Mammary epithelial cell (primary cell): ENCODE measurements at regions of chr4 and their contacts with region 1.

Region 1: DNA sequence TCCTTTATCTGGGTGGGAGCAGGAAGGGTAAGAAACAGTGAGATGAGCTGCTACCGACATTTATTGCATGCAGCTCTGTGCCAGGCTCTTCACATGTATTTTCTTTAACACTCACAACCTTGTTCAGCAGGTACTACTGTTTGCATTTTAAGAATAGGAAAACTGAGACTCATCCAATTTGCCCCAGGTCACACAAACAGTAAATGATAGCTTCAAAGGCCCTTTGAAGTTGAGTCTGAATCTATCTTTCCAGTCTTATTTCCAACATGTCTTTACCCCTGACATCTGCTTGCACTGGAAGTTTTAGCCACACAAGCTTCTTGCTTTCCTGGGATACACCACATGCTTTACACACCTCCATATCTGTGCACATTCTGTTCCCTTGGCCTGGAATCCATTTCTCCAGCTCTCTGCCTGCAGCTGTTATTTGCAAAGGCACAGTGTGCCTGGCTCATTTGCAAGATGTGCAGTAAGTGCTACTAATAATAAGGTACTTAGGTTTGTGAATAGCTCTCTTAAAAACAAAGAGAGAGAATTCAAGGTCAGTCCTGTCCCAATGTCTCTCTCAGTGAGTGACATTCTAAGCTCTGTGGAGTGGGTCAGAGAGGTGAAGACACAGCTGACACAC is 61.2 kb downstream of the METTL14 start:
- DNase-seq: no peak
- H3K4me3 ChIP-seq: no peak overlapping the region
- H3K27ac ChIP-seq: no peak overlapping the region
- H3K4me1 ChIP-seq: no peaks in the 10 kb centered on the region
- H3K27me3 ChIP-seq: no peaks in the 10 kb centered on the region
- CTCF ChIP-seq: no peak

Region 2: GRCh38 chr4:118712872-118713271 is 33.5 kb before region 1 on chr4:
- CTCF ChIA-PET with region 1: interaction called, 11 read pairs
- dilution Hi-C with region 1: no loop called
- in situ Hi-C with region 1: no loop called
- intact Hi-C with region 1: no loop called
- DNase-seq: peak; percentile 63
- H3K4me3 ChIP-seq: no peak overlapping the region
- H3K27ac ChIP-seq: no peak overlapping the region
- H3K4me1 ChIP-seq: no peaks in the 10 kb centered on the region
- H3K27me3 ChIP-seq: no peaks in the 10 kb centered on the region
- CTCF ChIP-seq: no peak

Region 3: GRCh38 chr4:118772081-118772766 is 25.8 kb after region 1 on chr4:
- CTCF ChIA-PET with region 1: no interaction called
- dilution Hi-C with region 1: no loop called
- in situ Hi-C with region 1: no loop called
- intact Hi-C with region 1: no loop called
- DNase-seq: peak; percentile 30
- H3K4me3 ChIP-seq: no peak overlapping the region
- H3K27ac ChIP-seq: no peak overlapping the region
- H3K4me1 ChIP-seq: peaks cover 39% of the 10 kb centered on the region
- H3K27me3 ChIP-seq: no peaks in the 10 kb centered on the region
- CTCF ChIP-seq: peak; percentile 50 to 54

Region 4: DNA sequence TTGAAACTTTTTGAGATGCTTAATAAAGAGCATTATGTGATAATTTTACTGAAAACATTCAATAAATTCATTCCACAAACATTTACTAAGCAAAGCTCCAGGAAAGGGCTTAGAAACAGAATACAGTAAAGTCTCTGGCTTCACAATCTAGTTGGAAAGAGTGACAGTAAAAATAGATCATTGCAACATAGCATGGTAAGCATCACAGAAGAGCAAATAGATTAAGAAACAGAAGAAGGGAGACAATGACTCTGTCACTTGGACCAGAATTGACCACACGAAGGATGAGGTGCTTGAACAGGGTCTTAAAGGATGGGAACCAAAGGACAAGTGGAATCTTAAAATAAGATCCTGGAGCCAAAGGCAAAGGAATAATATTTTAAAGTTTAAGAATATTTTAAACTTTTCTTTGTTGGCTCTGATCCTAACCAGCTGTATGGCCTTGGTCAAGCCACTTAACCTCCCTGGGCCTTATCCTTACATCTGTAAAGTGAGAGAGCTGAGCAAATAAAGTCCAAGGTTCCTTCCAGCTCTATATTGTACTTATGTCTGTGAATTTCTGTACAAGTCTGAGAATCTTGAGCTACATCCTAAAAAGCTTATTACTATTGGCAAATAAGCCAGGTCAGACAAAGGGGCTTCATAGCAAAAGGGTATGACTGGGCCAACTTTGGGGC is 55.6 kb after region 1 on chr4:
- CTCF ChIA-PET with region 1: no interaction called
- dilution Hi-C with region 1: no loop called
- in situ Hi-C with region 1: no loop called
- intact Hi-C with region 1: no loop called
- DNase-seq: no peak
- H3K4me3 ChIP-seq: no peak overlapping the region
- H3K27ac ChIP-seq: no peak overlapping the region
- H3K4me1 ChIP-seq: no peaks in the 10 kb centered on the region
- H3K27me3 ChIP-seq: no peaks in the 10 kb centered on the region
- CTCF ChIP-seq: no peak